ENCODE measurements at regions of chr17 and their contacts with region 1.

Region 1: DNA sequence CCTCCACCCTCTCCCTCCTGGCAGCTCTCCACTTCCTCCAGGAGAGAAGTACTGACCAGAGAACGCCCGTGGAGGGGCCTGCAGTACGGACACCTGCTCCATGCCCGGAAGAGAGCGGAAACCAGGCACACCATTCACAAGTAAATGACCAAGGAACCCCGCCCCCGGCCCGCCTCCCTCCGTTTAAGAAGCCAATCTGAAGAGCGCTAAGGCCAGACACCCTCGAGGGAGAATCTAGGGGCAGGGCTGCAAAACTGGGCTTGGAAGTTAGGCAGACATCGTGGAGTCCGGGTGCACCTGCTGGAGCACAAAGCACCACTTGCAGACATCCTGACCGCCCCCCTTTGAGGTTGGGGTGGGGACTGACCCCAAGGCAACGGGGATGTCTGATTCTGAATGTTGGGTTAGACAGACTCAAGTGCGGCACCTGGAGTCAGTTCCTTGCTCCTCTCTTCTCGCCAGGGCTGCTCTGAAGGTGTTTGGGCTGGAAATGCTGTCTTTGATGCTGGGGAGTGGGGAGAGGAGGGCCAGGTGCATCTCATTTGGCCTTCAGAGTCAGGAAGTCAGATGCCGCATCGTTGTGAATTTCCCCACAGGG is 964 bp upstream of the FAAP100 start:
- DNase-seq: peak; percentile 84
- H3K4me3 Mint-ChIP-seq: peak overlapping the region; percentile 83
- H3K27ac Mint-ChIP-seq: peak overlapping the region; percentile 82
- H3K4me1 Mint-ChIP-seq: peaks cover 38% of the 10 kb centered on the region
- H3K27me3 Mint-ChIP-seq: no peaks in the 10 kb centered on the region

Region 2: GRCh38 chr17:81222906-81223761 is 330.0 kb before region 1 on chr17 and contains the start of gene CEP131:
- CTCF ChIA-PET with region 1: no interaction called
- intact Hi-C with region 1: loop called (anchors 1 kb)
- DNase-seq: peak; percentile 100
- H3K4me3 Mint-ChIP-seq: peak within 1 kb of the TSS; percentile 77
- H3K27ac Mint-ChIP-seq: peak within 1 kb of the TSS; percentile 13
- H3K4me1 Mint-ChIP-seq: peaks cover 16% of the 10 kb centered on the region
- H3K27me3 Mint-ChIP-seq: no peaks in the 10 kb centered on the region
- total RNA-seq, gene CEP131: 9.4 to 9.8 TPM

Region 3: DNA sequence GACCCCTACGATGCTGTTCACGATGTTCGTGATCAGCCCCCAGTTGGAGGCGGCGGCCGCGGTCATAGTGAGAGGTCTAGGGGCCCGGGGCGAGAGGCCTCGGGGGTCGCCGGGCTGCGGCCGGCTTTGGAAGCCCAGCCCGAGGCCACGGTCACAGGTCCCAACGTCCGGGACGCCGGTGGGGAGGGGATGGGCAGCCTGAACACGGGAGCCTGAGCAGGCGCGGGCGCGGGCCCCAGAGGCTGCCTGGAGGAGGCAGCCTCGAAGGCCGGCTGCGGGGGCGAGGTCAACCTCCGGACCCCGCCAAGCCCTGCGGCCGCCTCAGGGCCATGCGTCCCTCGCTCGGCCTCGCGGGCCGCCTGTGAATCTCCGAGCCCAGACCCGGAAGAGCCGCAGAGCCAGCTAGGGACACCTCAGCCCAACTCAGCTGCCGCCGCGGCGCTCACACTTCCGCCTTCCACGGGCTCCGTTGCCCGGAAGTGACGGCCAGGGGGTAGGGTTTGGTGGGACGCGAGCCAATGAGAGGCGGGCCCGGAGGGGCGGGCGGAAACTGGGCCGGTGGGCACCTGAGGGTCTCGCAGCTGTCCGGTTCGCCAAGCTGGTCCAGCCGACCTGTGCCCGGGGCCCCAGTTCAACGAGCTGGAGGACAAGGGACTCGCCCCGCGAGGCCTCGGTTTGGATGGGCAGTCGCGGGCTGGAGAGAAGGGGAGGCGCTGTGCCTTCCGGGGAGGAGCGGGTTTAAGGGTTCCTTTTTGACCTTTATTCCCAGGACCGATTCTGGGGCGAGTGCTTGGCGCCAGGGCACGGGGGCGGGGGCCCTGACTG is 258.0 kb before region 1 on chr17 and contains the start of gene SLC38A10:
- CTCF ChIA-PET with region 1: no interaction called
- intact Hi-C with region 1: loop called (anchors 2 kb)
- DNase-seq: peak; percentile 95
- H3K4me3 Mint-ChIP-seq: peak within 1 kb of the TSS; percentile 92
- H3K27ac Mint-ChIP-seq: peak within 1 kb of the TSS; percentile 91
- H3K4me1 Mint-ChIP-seq: peaks cover 36% of the 10 kb centered on the region
- H3K27me3 Mint-ChIP-seq: no peaks in the 10 kb centered on the region
- total RNA-seq, gene SLC38A10: 29.1 to 31.9 TPM

Region 4: GRCh38 chr17:81537343-81537855 is 15.7 kb before region 1 on chr17:
- CTCF ChIA-PET with region 1: no interaction called
- intact Hi-C with region 1: no loop called
- DNase-seq: peak; percentile 31
- H3K4me3 Mint-ChIP-seq: no peak overlapping the region
- H3K27ac Mint-ChIP-seq: no peak overlapping the region
- H3K4me1 Mint-ChIP-seq: peaks cover 1% of the 10 kb centered on the region
- H3K27me3 Mint-ChIP-seq: peaks cover 11% of the 10 kb centered on the region

Region 5: GRCh38 chr17:81601525-81602120 is 48.5 kb after region 1 on chr17:
- CTCF ChIA-PET with region 1: interaction called, 4 read pairs
- intact Hi-C with region 1: loop called (anchors 2 kb)
- DNase-seq: peak; percentile 55
- H3K4me3 Mint-ChIP-seq: no peak overlapping the region
- H3K27ac Mint-ChIP-seq: peak overlapping the region; percentile 41
- H3K4me1 Mint-ChIP-seq: peaks cover 2% of the 10 kb centered on the region
- H3K27me3 Mint-ChIP-seq: no peaks in the 10 kb centered on the region

Region 6: GRCh38 chr17:81666342-81667191 is 113.5 kb after region 1 on chr17 and contains the starts of genes CCDC137 and OXLD1:
- CTCF ChIA-PET with region 1: no interaction called
- intact Hi-C with region 1: loop called (anchors 5 kb)
- DNase-seq: peak; percentile 97
- H3K4me3 Mint-ChIP-seq: peak within 1 kb of the TSS; percentile 99
- H3K27ac Mint-ChIP-seq: peak within 1 kb of the TSS; percentile 96
- H3K4me1 Mint-ChIP-seq: peaks cover 52% of the 10 kb centered on the region
- H3K27me3 Mint-ChIP-seq: no peaks in the 10 kb centered on the region
- total RNA-seq, gene CCDC137: 30.8 to 32.3 TPM
- total RNA-seq, gene OXLD1: 41.9 to 44.1 TPM

Region 7: DNA sequence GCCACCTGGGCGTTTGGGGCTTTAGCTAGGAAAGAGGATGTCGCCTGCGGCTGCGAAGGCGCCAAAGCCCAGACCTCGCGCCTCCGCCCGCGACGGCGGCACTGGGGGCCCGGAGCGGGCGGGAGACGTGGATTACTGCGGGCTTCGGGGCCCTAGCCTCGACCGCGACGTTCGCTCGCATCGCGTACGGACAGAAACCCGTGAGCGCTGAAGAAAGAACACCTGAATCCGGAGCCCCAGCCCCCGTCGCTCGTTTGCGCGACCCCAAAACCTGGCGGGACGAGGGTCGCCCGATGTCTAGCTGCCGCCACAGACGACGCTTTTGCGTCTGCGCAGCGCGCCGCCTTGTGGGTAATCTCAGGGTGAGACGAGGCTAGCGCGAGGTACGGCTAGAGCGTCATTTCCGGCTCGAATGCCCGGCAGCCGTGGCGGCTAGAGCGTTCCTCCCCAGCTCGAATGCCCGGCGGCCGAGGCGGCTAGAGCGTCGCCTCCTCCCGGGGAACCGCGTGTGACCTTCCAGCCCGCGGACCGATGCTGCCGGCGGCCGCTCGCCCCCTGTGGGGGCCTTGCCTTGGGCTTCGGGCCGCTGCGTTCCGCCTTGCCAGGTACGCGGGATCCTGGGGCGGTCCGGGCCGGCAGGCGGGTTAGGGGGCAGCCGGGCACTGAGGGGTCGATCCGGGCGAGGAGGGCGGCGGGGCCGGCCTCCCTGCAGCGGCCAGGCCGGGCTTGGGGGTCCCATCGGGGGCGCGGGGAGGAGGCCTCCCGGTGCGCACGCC is 150.0 kb after region 1 on chr17 and contains the start of gene MRPL12:
- CTCF ChIA-PET with region 1: no interaction called
- intact Hi-C with region 1: loop called (anchors 5 kb)
- DNase-seq: peak; percentile 91
- H3K4me3 Mint-ChIP-seq: peak within 1 kb of the TSS; percentile 95
- H3K27ac Mint-ChIP-seq: peak within 1 kb of the TSS; percentile 88
- H3K4me1 Mint-ChIP-seq: peaks cover 38% of the 10 kb centered on the region
- H3K27me3 Mint-ChIP-seq: no peaks in the 10 kb centered on the region
- total RNA-seq, gene MRPL12: 97.7 to 102 TPM